ENCODE measurements at regions of chr6 and their contacts with region 1.

Region 1: DNA sequence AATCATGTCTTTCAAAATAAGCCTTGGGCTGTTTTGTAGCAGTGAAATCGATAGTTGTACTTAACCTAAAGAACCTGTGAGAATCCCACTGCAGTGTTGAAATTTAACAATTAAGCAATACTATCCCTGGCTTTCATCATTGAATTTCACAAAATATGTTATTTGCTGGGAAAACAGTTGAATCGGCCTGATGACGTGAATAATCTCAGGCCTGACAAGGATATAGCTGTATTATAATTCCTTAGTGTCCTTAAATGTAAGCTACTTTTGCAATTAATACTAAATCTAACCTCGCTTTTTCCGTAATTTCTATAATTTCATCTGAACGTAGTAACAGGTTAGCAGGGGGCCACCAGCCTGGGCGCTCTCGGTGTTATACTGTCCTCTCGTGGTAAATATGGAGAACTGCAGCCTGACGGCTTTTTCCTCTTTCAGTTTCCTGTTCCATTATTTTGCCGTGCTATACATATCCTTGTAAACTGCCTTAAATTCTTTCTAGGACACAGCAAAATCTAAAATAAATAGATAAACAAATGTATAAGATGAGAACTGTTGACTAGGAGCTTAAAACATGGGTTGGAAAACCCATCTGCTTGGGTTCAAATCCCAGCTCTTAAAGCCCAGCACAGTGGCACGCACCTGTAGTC is 24.0 kb downstream of the MTFR2 start:
- DNase-seq: peak; percentile 59
- ATAC-seq: peak; percentile 82
- H3K4me3 ChIP-seq: peak overlapping the region; percentile 53 to 60 (median 59)
- H3K27ac ChIP-seq: no peak overlapping the region
- H3K4me1 ChIP-seq: peaks cover 29% of the 10 kb centered on the region
- H3K27me3 ChIP-seq: no peaks in the 10 kb centered on the region; a peak in 2 of 5 replicates
- CTCF ChIP-seq: peak; percentile 95
- EP300 ChIP-seq: no peak
- POLR2A ChIP-seq: no peak
- RAD21 ChIP-seq: peak; percentile 96

Region 2: GRCh38 chr6:135506270-135506997 is 719.7 kb before region 1 on chr6:
- CTCF ChIA-PET with region 1: interaction called, 6 read pairs
- POLR2A ChIA-PET with region 1: no interaction called
- in situ Hi-C with region 1: no loop called
- intact Hi-C with region 1: loop called (anchors 1 kb)
- DNase-seq: peak; percentile 45
- ATAC-seq: peak; percentile 70
- H3K4me3 ChIP-seq: no peak overlapping the region
- H3K27ac ChIP-seq: no peak overlapping the region
- H3K4me1 ChIP-seq: peaks cover 19% of the 10 kb centered on the region
- H3K27me3 ChIP-seq: no peaks in the 10 kb centered on the region
- CTCF ChIP-seq: peak; percentile 71
- EP300 ChIP-seq: no peak
- POLR2A ChIP-seq: no peak
- RAD21 ChIP-seq: no peak

Region 3: DNA sequence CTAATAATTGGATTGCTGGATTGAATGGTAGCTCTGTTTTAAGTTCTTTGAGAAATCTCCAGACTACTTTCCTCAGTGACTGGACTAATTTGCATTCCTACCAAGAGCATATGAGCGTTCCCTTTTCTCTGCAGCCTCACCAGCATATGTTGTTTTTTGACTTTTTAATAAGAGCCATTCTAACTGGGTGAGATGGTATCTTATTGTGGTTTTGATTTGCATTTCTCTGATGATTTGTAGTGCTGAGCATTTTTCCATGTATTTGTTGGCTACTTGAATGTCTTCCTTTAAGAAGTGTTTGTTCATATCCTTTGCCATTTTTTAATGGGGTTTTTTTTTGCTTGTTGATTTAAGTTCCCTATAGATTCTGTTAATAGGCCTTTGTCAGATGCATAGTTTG is 633.9 kb before region 1 on chr6:
- CTCF ChIA-PET with region 1: no interaction called
- POLR2A ChIA-PET with region 1: no interaction called
- in situ Hi-C with region 1: no loop called
- intact Hi-C with region 1: no loop called
- DNase-seq: no peak
- ATAC-seq: no peak
- H3K4me3 ChIP-seq: no peak overlapping the region
- H3K27ac ChIP-seq: no peak overlapping the region
- H3K4me1 ChIP-seq: no peaks in the 10 kb centered on the region
- H3K27me3 ChIP-seq: no peaks in the 10 kb centered on the region
- CTCF ChIP-seq: no peak
- EP300 ChIP-seq: no peak
- POLR2A ChIP-seq: no peak
- RAD21 ChIP-seq: no peak

Region 4: GRCh38 chr6:135675862-135676261 is 550.3 kb before region 1 on chr6:
- CTCF ChIA-PET with region 1: no interaction called
- POLR2A ChIA-PET with region 1: no interaction called
- in situ Hi-C with region 1: no loop called
- intact Hi-C with region 1: loop called (anchors 1 kb)
- DNase-seq: peak; percentile 22
- ATAC-seq: peak; percentile 44; the same call in 1 of the 3 replicates
- H3K4me3 ChIP-seq: no peak overlapping the region
- H3K27ac ChIP-seq: no peak overlapping the region
- H3K4me1 ChIP-seq: no peaks in the 10 kb centered on the region
- H3K27me3 ChIP-seq: no peaks in the 10 kb centered on the region
- CTCF ChIP-seq: peak; percentile 53
- EP300 ChIP-seq: no peak
- POLR2A ChIP-seq: no peak
- RAD21 ChIP-seq: no peak

Region 5: GRCh38 chr6:135909737-135910387 is 316.3 kb before region 1 on chr6:
- CTCF ChIA-PET with region 1: no interaction called
- POLR2A ChIA-PET with region 1: no interaction called
- in situ Hi-C with region 1: no loop called
- intact Hi-C with region 1: loop called (anchors 10 kb)
- DNase-seq: peak; percentile 70
- ATAC-seq: peak; percentile 97
- H3K4me3 ChIP-seq: no peak overlapping the region
- H3K27ac ChIP-seq: no peak overlapping the region
- H3K4me1 ChIP-seq: no peaks in the 10 kb centered on the region
- H3K27me3 ChIP-seq: 0 out of 5 replicates have a peak, but pooled peaks cover 0 to 7% of the 10 kb centered on the region in 2 experiments
- CTCF ChIP-seq: peak; percentile 81
- EP300 ChIP-seq: no peak
- POLR2A ChIP-seq: no peak
- RAD21 ChIP-seq: peak; percentile 54; the same call in 1 of the 2 replicates

Region 6: DNA sequence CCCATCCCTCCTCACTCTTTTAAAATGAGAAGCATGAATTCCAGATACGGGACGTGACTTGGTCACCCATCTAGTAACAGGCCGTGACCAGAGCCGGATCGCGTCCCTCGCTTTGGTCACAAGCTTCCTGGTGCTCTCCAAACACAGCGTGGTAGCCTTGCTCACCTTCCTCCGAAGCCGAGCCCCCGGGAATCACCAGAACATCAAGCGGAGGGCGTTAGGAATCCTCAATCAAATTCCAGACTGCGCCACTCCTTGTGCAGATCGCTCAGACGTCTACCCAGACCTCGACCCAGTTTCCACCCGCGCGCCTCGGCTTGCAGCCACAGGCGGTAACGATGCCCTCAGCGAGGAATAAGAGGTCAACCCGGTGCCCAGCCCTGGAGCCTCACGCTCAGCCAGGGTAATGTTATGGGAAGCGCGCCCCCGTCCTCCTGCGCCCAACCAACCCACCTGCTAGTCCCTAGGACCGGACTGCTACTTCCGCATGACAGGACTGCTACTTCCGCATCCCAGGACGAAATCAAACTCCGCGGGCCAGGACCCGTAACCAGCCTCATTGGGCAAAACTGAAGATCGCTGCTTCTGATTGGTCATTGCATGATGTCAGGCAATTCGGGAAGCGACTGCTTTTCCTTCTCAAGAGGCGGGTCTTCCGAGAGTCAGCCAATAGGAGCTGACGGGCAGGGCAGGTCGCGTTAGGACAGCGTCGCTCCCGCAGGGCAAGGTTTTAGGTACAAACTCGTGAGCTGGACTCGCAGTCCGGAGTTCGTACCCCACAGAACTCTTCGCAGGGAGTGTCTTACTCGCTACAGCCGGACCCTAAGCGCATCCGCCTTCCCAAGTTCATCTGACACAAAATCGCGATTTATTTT is 23.9 kb after region 1 on chr6 and contains the start of gene MTFR2:
- CTCF ChIA-PET with region 1: no interaction called
- POLR2A ChIA-PET with region 1: interaction called, 22 read pairs
- in situ Hi-C with region 1: no loop called
- intact Hi-C with region 1: no loop called
- DNase-seq: peak; percentile 100
- ATAC-seq: peak; percentile 93
- H3K4me3 ChIP-seq: peak within 1 kb of the TSS; percentile 86 to 96 (median 88)
- H3K27ac ChIP-seq: peak within 1 kb of the TSS; percentile 57
- H3K4me1 ChIP-seq: peaks cover 19% of the 10 kb centered on the region
- H3K27me3 ChIP-seq: no peaks in the 10 kb centered on the region; a peak in 1 of 5 replicates
- CTCF ChIP-seq: peak; percentile 51
- EP300 ChIP-seq: peak in 1 of 2 experiments; percentile 26; a peak in 1 of 4 replicates
- POLR2A ChIP-seq: peak; percentile 89 to 92
- RAD21 ChIP-seq: peak; percentile 27
- total RNA-seq, gene MTFR2: 10.7 and 12.5 TPM in 2 replicates

Measured in HepG2 (cell line).